ENCODE measurements at regions of chr2 and their contacts with region 1.

Region 1: DNA sequence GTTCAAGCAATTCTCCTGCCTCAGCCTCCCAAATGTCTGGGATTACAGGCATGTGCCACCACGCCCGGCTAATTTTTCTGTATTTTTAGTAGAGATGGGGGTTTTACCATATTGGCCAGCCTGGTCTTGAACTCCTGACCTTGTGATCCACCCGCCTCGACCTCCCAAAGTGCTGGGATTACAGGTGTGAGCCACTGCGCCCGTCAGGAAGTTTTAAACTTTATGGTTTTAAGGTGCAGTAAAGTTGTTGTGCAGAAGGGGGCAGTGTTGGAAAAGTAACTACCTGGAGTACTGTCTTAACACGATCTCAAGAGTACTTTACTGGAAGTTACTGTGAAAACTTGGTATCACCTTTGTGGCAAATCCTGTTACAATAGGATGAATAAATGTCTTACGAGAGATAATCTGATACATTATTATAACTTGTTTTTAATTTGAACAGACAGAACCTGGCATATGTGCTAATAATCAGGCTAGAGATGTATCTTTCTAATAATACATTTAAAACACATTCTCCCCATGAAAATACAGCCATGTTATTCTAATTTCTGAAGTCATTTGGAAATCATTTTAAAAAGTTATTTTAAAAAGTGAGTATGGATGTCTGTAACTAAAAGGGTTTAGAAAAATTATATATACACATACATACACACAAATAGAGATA is 10.8 kb downstream of the SPDYA start:
- DNase-seq: peak; percentile 81
- H3K4me3 ChIP-seq: no peak overlapping the region
- H3K27ac ChIP-seq: no peak overlapping the region
- H3K4me1 ChIP-seq: no peaks in the 10 kb centered on the region
- H3K27me3 ChIP-seq: no peaks in the 10 kb centered on the region
- CTCF ChIP-seq: peak; percentile 45 to 56
- POLR2A ChIP-seq: no peak

Region 2: DNA sequence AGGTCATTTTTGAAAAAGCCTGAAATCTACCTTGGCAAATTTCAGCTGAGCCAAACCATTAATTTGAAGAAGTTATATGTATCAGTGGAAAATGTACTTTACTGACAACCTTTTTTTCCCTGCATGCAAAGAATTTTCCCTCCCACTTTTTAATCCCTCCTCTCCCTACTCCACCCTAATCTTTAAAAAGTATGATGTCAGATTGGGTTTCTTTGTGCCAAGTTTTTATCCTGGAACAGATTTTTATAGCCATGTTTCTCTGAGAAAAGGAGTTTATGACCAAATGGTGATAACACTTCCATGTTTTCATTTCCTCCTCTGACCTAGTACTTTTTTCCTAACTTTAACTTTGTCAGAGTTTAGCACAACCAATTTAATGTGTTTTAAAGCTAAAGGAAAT is 679.0 kb before region 1 on chr2:
- CTCF ChIA-PET with region 1: no interaction called
- POLR2A ChIA-PET with region 1: no interaction called
- dilution Hi-C with region 1: no loop called
- intact Hi-C with region 1: no loop called
- DNase-seq: peak; percentile 38
- H3K4me3 ChIP-seq: no peak overlapping the region
- H3K27ac ChIP-seq: no peak overlapping the region
- H3K4me1 ChIP-seq: no peaks in the 10 kb centered on the region
- H3K27me3 ChIP-seq: no peaks in the 10 kb centered on the region
- CTCF ChIP-seq: no peak
- POLR2A ChIP-seq: no peak

Region 3: GRCh38 chr2:28810384-28811285 is 10.8 kb before region 1 on chr2 and contains the start of gene SPDYA:
- CTCF ChIA-PET with region 1: interaction called, 15 read pairs
- POLR2A ChIA-PET with region 1: no interaction called
- dilution Hi-C with region 1: no loop called
- intact Hi-C with region 1: no loop called
- DNase-seq: peak; percentile 73
- H3K4me3 ChIP-seq: peak within 1 kb of the TSS in 2 of 3 experiments; percentile 5 to 44
- H3K27ac ChIP-seq: no peak within 1 kb of the TSS
- H3K4me1 ChIP-seq: peaks cover 10% of the 10 kb centered on the region
- H3K27me3 ChIP-seq: no peaks in the 10 kb centered on the region
- CTCF ChIP-seq: no peak
- POLR2A ChIP-seq: no peak
- total RNA-seq, gene SPDYA: 0.92 and 1.6 TPM in 2 replicates

Region 4: GRCh38 chr2:28894470-28895177 is 73.2 kb after region 1 on chr2 and contains the start of gene WDR43:
- CTCF ChIA-PET with region 1: interaction called, 6 read pairs
- POLR2A ChIA-PET with region 1: no interaction called
- dilution Hi-C with region 1: no loop called
- intact Hi-C with region 1: loop called (anchors 2 kb)
- DNase-seq: peak; percentile 100
- H3K4me3 ChIP-seq: peak within 1 kb of the TSS; percentile 93 to 98 (median 94)
- H3K27ac ChIP-seq: peak within 1 kb of the TSS; percentile 84
- H3K4me1 ChIP-seq: peaks cover 26% of the 10 kb centered on the region
- H3K27me3 ChIP-seq: no peaks in the 10 kb centered on the region
- CTCF ChIP-seq: no peak
- POLR2A ChIP-seq: peak; percentile 89
- total RNA-seq, gene WDR43: 60.6 and 65.0 TPM in 2 replicates

Region 5: GRCh38 chr2:28927878-28928277 is 106.5 kb after region 1 on chr2:
- CTCF ChIA-PET with region 1: no interaction called
- POLR2A ChIA-PET with region 1: no interaction called
- dilution Hi-C with region 1: no loop called
- intact Hi-C with region 1: loop called (anchors 5 kb)
- DNase-seq: no peak
- H3K4me3 ChIP-seq: no peak overlapping the region
- H3K27ac ChIP-seq: peak overlapping the region; percentile 61
- H3K4me1 ChIP-seq: peaks cover 9% of the 10 kb centered on the region
- H3K27me3 ChIP-seq: no peaks in the 10 kb centered on the region
- CTCF ChIP-seq: no peak
- POLR2A ChIP-seq: no peak

Region 6: GRCh38 chr2:28958689-28959088 is 137.3 kb after region 1 on chr2:
- CTCF ChIA-PET with region 1: no interaction called
- POLR2A ChIA-PET with region 1: no interaction called
- dilution Hi-C with region 1: no loop called
- intact Hi-C with region 1: loop called (anchors 2 kb)
- DNase-seq: peak; percentile 66
- H3K4me3 ChIP-seq: no peak overlapping the region
- H3K27ac ChIP-seq: no peak overlapping the region
- H3K4me1 ChIP-seq: peaks cover 7% of the 10 kb centered on the region
- H3K27me3 ChIP-seq: no peaks in the 10 kb centered on the region
- CTCF ChIP-seq: peak; percentile 38 to 58
- POLR2A ChIP-seq: no peak

Region 7: DNA sequence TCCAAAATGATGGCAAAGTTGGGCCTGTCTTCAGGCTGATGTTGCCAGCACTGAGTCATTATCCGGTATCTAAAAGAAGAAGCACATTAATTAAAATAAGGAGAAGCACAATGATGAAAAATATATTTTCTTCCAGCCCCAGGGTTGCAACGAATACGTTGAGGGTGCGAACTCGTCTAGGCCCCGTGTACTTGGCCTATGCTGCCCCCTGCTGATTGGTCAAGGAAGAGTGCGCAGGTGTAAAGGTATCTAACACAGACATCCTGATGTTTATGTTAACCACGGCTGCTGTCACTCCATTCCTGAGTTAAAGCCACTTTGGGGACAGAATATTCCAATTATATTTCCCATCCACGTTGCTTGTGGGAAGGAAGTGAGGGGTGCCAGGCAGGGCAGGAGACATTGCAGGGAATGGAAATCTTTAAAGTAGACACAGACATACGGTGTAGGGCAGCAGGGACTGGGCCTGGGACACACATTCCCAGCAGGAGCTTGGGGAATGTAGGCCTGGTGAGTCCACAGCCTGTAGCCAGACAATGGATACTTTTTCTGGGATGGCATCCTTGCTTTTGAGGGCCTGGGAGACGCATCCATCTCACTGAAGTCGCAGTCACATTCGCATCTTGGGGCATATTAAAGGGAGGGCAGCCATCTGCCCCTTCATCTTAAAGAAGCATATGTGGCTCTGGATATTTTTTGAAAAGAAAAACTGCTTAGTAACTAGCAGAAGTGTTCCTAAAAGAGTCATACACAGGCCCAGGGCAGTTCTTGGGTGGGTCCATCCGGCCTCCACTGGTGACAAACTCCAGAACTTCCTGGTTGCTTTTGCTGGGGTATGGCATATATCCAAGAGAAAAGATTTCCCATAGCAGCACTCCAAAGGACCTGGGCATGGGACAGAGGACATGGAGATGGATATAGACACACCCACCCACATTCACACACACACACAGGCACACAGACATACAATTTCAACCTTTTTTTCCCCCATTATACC is 375.7 kb after region 1 on chr2:
- CTCF ChIA-PET with region 1: no interaction called
- POLR2A ChIA-PET with region 1: no interaction called
- dilution Hi-C with region 1: no loop called
- intact Hi-C with region 1: loop called (anchors 5 kb)
- DNase-seq: peak; percentile 56
- H3K4me3 ChIP-seq: no peak overlapping the region
- H3K27ac ChIP-seq: no peak overlapping the region
- H3K4me1 ChIP-seq: peaks cover 6% of the 10 kb centered on the region
- H3K27me3 ChIP-seq: no peaks in the 10 kb centered on the region
- CTCF ChIP-seq: peak; percentile 77
- POLR2A ChIP-seq: no peak

Region 8: DNA sequence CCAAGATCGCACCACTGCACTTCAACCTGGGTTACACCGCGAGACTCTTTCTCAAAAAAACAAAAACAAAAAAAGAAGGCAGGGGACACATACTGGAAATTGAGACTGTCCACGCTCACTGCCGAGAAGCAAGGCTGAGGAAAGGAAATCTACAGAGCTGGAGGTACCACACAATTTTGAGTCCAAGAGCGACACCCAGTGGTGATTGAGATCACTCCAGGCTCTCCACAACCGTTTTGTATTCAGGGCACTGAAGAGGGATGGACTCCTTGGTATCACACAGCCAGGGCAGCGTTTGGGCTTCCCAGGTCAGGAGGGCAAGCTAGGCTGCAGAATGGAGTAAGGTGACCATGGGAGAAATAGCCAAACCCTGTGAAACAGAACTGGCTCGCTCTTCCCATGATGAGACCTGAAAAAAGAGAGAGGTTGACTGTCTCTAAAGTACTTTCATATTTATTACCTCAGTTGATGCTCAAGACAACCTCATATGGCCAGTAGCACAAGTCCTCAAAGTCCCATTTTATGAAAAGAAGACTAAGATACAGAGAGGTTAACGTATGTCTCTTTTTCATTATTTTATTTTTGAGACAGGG is 1250.9 kb after region 1 on chr2:
- CTCF ChIA-PET with region 1: interaction called, 11 read pairs
- POLR2A ChIA-PET with region 1: no interaction called
- dilution Hi-C with region 1: no loop called
- intact Hi-C with region 1: loop called (anchors 5 kb)
- DNase-seq: peak; percentile 57
- H3K4me3 ChIP-seq: no peak overlapping the region
- H3K27ac ChIP-seq: no peak overlapping the region
- H3K4me1 ChIP-seq: no peaks in the 10 kb centered on the region
- H3K27me3 ChIP-seq: no peaks in the 10 kb centered on the region
- CTCF ChIP-seq: peak; percentile 50 to 75
- POLR2A ChIP-seq: no peak

Measured in endothelial cell of umbilical vein (primary cell).